PC-9 (cell line): ENCODE measurements at regions of chr2 and their contacts with region 1.

Region 1: DNA sequence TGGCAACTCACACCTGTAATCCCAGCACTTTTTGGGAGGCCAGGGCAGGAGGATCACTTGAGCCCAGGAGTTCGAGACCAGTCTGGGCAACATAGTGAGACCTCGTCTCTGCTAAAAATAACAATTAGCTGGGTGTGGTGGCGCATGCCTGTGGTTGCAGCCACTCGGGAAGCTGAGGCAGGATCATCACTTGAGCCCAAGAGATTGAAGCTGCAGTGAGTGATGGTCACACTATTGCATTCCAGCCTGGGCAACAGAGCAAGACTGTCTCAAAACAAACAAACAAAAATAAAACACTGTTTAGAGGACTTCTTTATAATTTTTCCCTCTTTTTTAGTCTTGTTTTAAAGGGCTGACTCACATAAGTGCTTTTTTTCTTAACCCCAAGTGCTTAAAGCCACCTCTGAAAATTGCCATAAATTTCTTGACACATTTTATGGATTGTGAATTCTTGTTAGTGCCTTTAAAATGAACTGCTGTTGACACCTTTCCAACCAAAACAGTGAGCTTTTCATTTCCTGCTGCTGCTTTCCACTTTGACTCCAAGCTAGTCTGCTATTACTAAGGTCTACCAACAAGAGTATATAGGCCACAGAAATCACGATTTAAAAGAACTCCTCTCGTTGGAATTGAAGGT is 41.7 kb downstream of the CYP20A1 start:
- DNase-seq: no peak
- H3K4me3 ChIP-seq: no peak overlapping the region
- H3K27ac ChIP-seq: no peak overlapping the region
- H3K4me1 ChIP-seq: no peaks in the 10 kb centered on the region
- H3K27me3 ChIP-seq: no peaks in the 10 kb centered on the region
- CTCF ChIP-seq: no peak

Region 2: GRCh38 chr2:201568217-201568820 is 1712.2 kb before region 1 on chr2:
- CTCF ChIA-PET with region 1: interaction called, 10 read pairs
- POLR2A ChIA-PET with region 1: no interaction called
- intact Hi-C with region 1: no loop called
- DNase-seq: no peak
- H3K4me3 ChIP-seq: no peak overlapping the region
- H3K27ac ChIP-seq: no peak overlapping the region
- H3K4me1 ChIP-seq: no peaks in the 10 kb centered on the region
- H3K27me3 ChIP-seq: no peaks in the 10 kb centered on the region
- CTCF ChIP-seq: no peak